Right lobe of liver (tissue), 6 donors: ENCODE measurements at regions of chr3 and their contacts with region 1.

Region 1: DNA sequence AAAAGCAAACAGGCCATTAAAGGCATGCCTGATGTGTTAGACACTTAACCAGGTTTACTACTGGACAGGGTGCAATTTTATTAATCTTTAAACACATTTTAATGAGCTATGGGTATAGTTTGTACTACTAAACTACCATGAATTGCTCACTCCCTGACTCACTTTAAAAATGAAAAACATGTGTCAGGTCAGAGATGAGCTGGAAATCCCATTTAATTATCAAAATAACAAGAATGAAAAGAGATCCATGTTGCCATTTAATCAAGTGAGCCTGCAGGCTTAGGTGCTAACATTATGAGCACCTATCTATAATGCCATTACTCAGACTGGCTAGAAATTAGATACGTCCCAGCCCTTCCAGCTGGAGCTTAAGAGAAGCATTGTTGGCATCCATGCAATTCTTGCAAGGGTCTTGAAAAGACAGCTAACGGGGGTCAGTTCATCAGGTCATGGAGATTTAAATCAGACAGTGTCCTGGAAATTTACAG is 224.4 kb downstream of the THRB start:
- DNase-seq: no peak
- ATAC-seq: no peak
- H3K4me3 ChIP-seq: no peak overlapping the region
- H3K27ac ChIP-seq: no peak overlapping the region
- H3K4me1 ChIP-seq: peaks cover 0 to 23% (median 3%) of the 10 kb centered on the region in 4 donors
- H3K27me3 ChIP-seq: no peaks in the 10 kb centered on the region
- CTCF ChIP-seq: no peak
- POLR2A ChIP-seq: no peak

Region 2: DNA sequence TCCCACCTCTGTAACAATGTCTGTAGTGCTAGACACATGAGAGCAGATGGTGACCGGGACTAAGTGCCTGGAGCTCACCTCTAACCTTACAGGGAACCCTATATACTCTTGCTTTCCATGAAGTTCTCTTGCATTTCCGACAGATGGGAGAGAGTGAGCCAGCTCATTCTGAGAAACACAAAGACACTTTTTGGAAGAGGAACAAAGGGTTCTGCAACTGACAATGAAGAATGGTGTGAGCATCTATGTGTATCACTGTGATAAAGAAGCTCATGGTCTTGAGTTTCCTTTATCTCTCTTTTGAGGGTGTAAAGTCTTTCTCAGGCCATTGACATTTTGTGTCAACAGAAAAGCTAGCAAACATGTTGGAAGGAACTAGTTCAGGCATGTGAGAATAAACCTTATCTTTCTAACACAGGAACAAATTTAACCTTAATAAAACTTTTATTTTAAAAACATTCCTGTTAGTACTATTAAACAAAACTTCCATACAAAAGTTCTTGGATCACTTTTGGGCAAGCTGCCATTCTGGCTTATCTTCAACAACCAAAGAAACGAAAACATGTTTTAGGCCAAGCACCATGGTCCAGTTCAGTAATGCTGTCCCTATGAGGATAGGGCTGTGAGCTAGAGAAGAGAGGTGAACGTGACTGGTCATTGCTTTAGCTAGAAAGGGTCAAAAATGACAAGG is 81.7 kb after region 1 on chr3:
- intact Hi-C with region 1: loop called in 1 of 2 experiments (anchors 10 kb)
- DNase-seq: peak in 1 of 3 donors; percentile 69
- ATAC-seq: peak; percentile 73 to 81 (median 75)
- H3K4me3 ChIP-seq: no peak overlapping the region
- H3K27ac ChIP-seq: no peak overlapping the region
- H3K4me1 ChIP-seq: peaks cover 0 to 33% (median 11%) of the 10 kb centered on the region in 4 donors
- H3K27me3 ChIP-seq: no peaks in the 10 kb centered on the region
- CTCF ChIP-seq: no peak
- POLR2A ChIP-seq: no peak

Region 3: DNA sequence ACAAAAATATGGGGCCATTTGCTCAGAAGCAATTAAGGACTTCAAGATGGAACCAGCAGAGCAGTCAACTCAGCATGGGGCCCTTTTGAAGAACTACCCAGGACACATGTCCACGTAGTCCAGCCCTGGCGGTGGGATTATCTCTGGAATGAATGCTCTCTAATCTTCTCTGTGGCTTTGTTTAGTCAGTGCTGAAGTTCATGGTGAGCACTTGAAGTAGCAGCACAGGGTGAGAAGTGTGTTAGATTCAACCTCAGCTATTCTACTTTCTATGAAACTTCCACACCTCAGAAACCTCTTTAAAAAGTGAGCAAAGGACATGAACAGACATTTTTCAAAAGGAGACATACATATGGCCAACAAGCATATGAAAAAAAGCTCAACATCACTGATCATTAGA is 150.0 kb after region 1 on chr3:
- intact Hi-C with region 1: no loop called
- DNase-seq: no peak
- ATAC-seq: no peak
- H3K4me3 ChIP-seq: no peak overlapping the region
- H3K27ac ChIP-seq: no peak overlapping the region
- H3K4me1 ChIP-seq: peaks cover 0 to 42% (median 15%) of the 10 kb centered on the region in 4 donors
- H3K27me3 ChIP-seq: no peaks in the 10 kb centered on the region
- CTCF ChIP-seq: no peak
- POLR2A ChIP-seq: no peak